AG04449 (cell line): ENCODE measurements at regions of chr12 and their contacts with region 1.

Region 1: GRCh38 chr12:51341259-51342007 is 5.0 kb downstream of the CELA1 start:
- DNase-seq: no peak
- H3K4me3 ChIP-seq: peak overlapping the region; percentile 41
- CTCF ChIP-seq: peak; percentile 89

Region 2: GRCh38 chr12:50825372-50825838 is 516.0 kb before region 1 on chr12:
- CTCF ChIA-PET with region 1: interaction called, 15 read pairs
- POLR2A ChIA-PET with region 1: no interaction called
- DNase-seq: peak; percentile 26
- H3K4me3 ChIP-seq: no peak overlapping the region
- CTCF ChIP-seq: no peak

Region 3: GRCh38 chr12:51047655-51048540 is 293.5 kb before region 1 on chr12 and contains the start of gene LETMD1:
- CTCF ChIA-PET with region 1: interaction called, 13 read pairs
- POLR2A ChIA-PET with region 1: no interaction called
- DNase-seq: peak; percentile 91
- H3K4me3 ChIP-seq: peak within 1 kb of the TSS; percentile 94
- CTCF ChIP-seq: peak; percentile 98

Region 4: GRCh38 chr12:51246254-51246853 is 95.1 kb before region 1 on chr12:
- CTCF ChIA-PET with region 1: interaction called, 15 read pairs
- POLR2A ChIA-PET with region 1: no interaction called
- DNase-seq: no peak
- H3K4me3 ChIP-seq: no peak overlapping the region
- CTCF ChIP-seq: no peak

Region 5: GRCh38 chr12:51270067-51270970 is 71.1 kb before region 1 on chr12 and contains the start of gene SMAGP:
- CTCF ChIA-PET with region 1: interaction called, 92 read pairs
- POLR2A ChIA-PET with region 1: interaction called, 3 read pairs
- DNase-seq: no peak
- H3K4me3 ChIP-seq: peak within 1 kb of the TSS; percentile 70
- CTCF ChIP-seq: no peak

Region 6: GRCh38 chr12:51351913-51352532 is 10.6 kb after region 1 on chr12:
- CTCF ChIA-PET with region 1: interaction called, 45 read pairs
- POLR2A ChIA-PET with region 1: no interaction called
- DNase-seq: no peak
- H3K4me3 ChIP-seq: no peak overlapping the region
- CTCF ChIP-seq: peak; percentile 76

Region 7: GRCh38 chr12:51449577-51450246 is 108.3 kb after region 1 on chr12:
- CTCF ChIA-PET with region 1: no interaction called
- POLR2A ChIA-PET with region 1: no interaction called
- DNase-seq: no peak
- H3K4me3 ChIP-seq: no peak overlapping the region
- CTCF ChIP-seq: no peak